ENCODE measurements at regions of chr2 and their contacts with region 1.

Region 1: DNA sequence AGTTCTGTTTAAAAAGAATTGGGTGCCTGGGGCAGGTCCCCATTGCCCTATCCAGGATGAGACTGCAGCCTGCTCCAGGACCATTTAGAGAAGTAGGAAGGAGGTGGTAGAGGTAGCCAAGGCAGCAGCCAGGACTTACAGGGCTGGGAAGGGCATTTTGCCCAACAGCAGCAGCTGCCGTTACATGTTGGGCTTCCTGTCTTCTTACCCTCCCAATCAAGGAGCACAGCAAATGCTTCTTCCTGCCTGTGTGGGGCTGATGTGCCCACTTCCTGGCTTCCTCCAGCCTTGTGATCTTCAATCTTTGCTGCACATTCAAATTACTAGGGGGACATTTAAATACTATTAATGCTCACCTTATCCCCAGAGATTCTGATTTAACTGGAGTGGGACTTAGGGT is 112.0 kb downstream of the QPCT start:
- DNase-seq: no peak
- H3K4me3 ChIP-seq: no peak overlapping the region
- H3K27ac ChIP-seq: no peak overlapping the region
- H3K4me1 ChIP-seq: peaks cover 15% of the 10 kb centered on the region
- H3K27me3 ChIP-seq: no peaks in the 10 kb centered on the region
- CTCF ChIP-seq: no peak

Region 2: GRCh38 chr2:37529830-37530415 is 73.4 kb after region 1 on chr2:
- CTCF ChIA-PET with region 1: no interaction called
- POLR2A ChIA-PET with region 1: interaction called, 10 read pairs
- intact Hi-C with region 1: no loop called
- DNase-seq: no peak
- H3K4me3 ChIP-seq: no peak overlapping the region
- H3K27ac ChIP-seq: no peak overlapping the region
- H3K4me1 ChIP-seq: no peaks in the 10 kb centered on the region
- H3K27me3 ChIP-seq: no peaks in the 10 kb centered on the region
- CTCF ChIP-seq: no peak

Measured in PC-9 (cell line).